ENCODE measurements at regions of chr7 and their contacts with region 1.

Region 1: GRCh38 chr7:45663167-45663921 is 89.2 kb downstream of the ADCY1 start:
- DNase-seq: no peak
- H3K4me3 ChIP-seq: no peak overlapping the region
- H3K27ac ChIP-seq: no peak overlapping the region
- H3K4me1 ChIP-seq: no peaks in the 10 kb centered on the region
- H3K27me3 ChIP-seq: no peaks in the 10 kb centered on the region
- CTCF ChIP-seq: peak; percentile 63 to 72
- POLR2A ChIP-seq: no peak

Region 2: GRCh38 chr7:45146531-45147379 is 516.6 kb before region 1 on chr7:
- CTCF ChIA-PET with region 1: no interaction called
- POLR2A ChIA-PET with region 1: no interaction called
- dilution Hi-C with region 1: no loop called
- intact Hi-C with region 1: no loop called
- DNase-seq: no peak
- H3K4me3 ChIP-seq: no peak overlapping the region
- H3K27ac ChIP-seq: no peak overlapping the region
- H3K4me1 ChIP-seq: no peaks in the 10 kb centered on the region
- H3K27me3 ChIP-seq: peaks cover 0 to 6% of the 10 kb centered on the region in 2 experiments
- CTCF ChIP-seq: no peak
- POLR2A ChIP-seq: no peak

Region 3: DNA sequence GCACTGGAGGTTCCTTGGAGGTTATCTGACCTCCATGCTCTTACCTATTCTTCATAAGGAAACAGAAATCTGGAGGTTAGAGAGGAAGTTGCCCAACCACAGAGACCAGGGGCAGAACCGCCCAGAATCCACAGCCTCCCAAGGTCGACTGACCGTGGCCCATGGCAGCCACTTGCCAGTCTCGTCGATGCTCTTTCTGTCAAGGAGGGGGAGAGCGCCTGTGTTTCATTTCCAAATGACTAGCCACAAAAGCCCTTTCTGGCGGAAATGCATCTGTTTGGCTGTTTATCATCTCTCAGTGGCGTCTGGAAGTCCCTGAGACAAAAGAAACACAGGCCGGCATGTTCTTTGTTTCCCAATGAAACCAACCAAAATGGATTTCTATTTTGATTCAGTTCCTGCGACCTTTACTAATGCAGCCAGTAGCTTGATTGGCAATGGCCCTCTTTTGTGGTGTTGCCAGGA is 502.9 kb before region 1 on chr7:
- CTCF ChIA-PET with region 1: no interaction called
- POLR2A ChIA-PET with region 1: no interaction called
- dilution Hi-C with region 1: no loop called
- intact Hi-C with region 1: no loop called
- DNase-seq: no peak
- H3K4me3 ChIP-seq: no peak overlapping the region
- H3K27ac ChIP-seq: no peak overlapping the region
- H3K4me1 ChIP-seq: no peaks in the 10 kb centered on the region
- H3K27me3 ChIP-seq: peaks cover 21 to 26% of the 10 kb centered on the region in 2 experiments
- CTCF ChIP-seq: no peak
- POLR2A ChIP-seq: no peak

Region 4: GRCh38 chr7:45679516-45679915 is 16.2 kb after region 1 on chr7:
- CTCF ChIA-PET with region 1: interaction called, 11 read pairs
- POLR2A ChIA-PET with region 1: no interaction called
- dilution Hi-C with region 1: no loop called
- intact Hi-C with region 1: no loop called
- DNase-seq: no peak
- H3K4me3 ChIP-seq: no peak overlapping the region
- H3K27ac ChIP-seq: no peak overlapping the region
- H3K4me1 ChIP-seq: no peaks in the 10 kb centered on the region
- H3K27me3 ChIP-seq: peaks cover 0 to 1% of the 10 kb centered on the region in 2 experiments
- CTCF ChIP-seq: no peak
- POLR2A ChIP-seq: no peak

Region 5: GRCh38 chr7:45863715-45864114 is 200.4 kb after region 1 on chr7:
- CTCF ChIA-PET with region 1: interaction called, 10 read pairs
- POLR2A ChIA-PET with region 1: no interaction called
- dilution Hi-C with region 1: no loop called
- intact Hi-C with region 1: no loop called
- DNase-seq: no peak
- H3K4me3 ChIP-seq: no peak overlapping the region
- H3K27ac ChIP-seq: no peak overlapping the region
- H3K4me1 ChIP-seq: peaks cover 4% of the 10 kb centered on the region
- H3K27me3 ChIP-seq: peaks cover 0 to 4% of the 10 kb centered on the region in 2 experiments
- CTCF ChIP-seq: peak; percentile 7 to 20
- POLR2A ChIP-seq: no peak